Sigmoid colon (tissue), 7 donors: ENCODE measurements at regions of chr19 and their contacts with region 1.

Region 1: GRCh38 chr19:36915992-36916830 is at the starts of genes ZNF568 and ZNF829:
- DNase-seq: peak; percentile 91
- H3K4me3 ChIP-seq: peak within 1 kb of the TSS; percentile 65 to 77 (median 68)
- H3K27ac ChIP-seq: peak within 1 kb of the TSS; percentile 91 to 96 (median 93)
- H3K4me1 ChIP-seq: peaks cover 0 to 18% (median 17%) of the 10 kb centered on the region in 4 donors
- H3K27me3 ChIP-seq: no peaks in the 10 kb centered on the region
- CTCF ChIP-seq: peak in 3 of 4 experiments; percentile 38 to 56 (median 54)
- EP300 ChIP-seq: no peak
- POLR2A ChIP-seq: no peak
- total RNA-seq, gene ZNF568: 8.7 to 18.9 (median 14.0) TPM
- total RNA-seq, gene ZNF829: 3.6 to 6.4 (median 4.8) TPM

Region 2: GRCh38 chr19:36378625-36379509 is 537.3 kb before region 1 on chr19 and contains the start of gene ZFP14:
- intact Hi-C with region 1: loop called (anchors 10 kb)
- DNase-seq: peak; percentile 95
- H3K4me3 ChIP-seq: peak within 1 kb of the TSS; percentile 70 to 79 (median 74)
- H3K27ac ChIP-seq: peak within 1 kb of the TSS; percentile 85 to 88 (median 86)
- H3K4me1 ChIP-seq: peaks cover 0 to 22% (median 13%) of the 10 kb centered on the region in 4 donors
- H3K27me3 ChIP-seq: no peaks in the 10 kb centered on the region
- CTCF ChIP-seq: no peak
- EP300 ChIP-seq: no peak
- POLR2A ChIP-seq: peak; percentile 72 to 80
- total RNA-seq, gene ZFP14: 3.5 to 13.3 (median 7.6) TPM

Region 3: GRCh38 chr19:36665832-36666231 is 250.4 kb before region 1 on chr19:
- intact Hi-C with region 1: loop called (anchors 5 kb)
- DNase-seq: no peak
- H3K4me3 ChIP-seq: peak overlapping the region; percentile 66 to 86 (median 76)
- H3K27ac ChIP-seq: no peak overlapping the region
- H3K4me1 ChIP-seq: peaks cover 0 to 21% (median 17%) of the 10 kb centered on the region in 4 donors
- H3K27me3 ChIP-seq: no peaks in the 10 kb centered on the region
- CTCF ChIP-seq: no peak
- EP300 ChIP-seq: no peak
- POLR2A ChIP-seq: no peak

Region 4: GRCh38 chr19:36745870-36746269 is 170.3 kb before region 1 on chr19:
- intact Hi-C with region 1: no loop called
- DNase-seq: no peak
- H3K4me3 ChIP-seq: no peak overlapping the region
- H3K27ac ChIP-seq: no peak overlapping the region
- H3K4me1 ChIP-seq: no peaks in the 10 kb centered on the region
- H3K27me3 ChIP-seq: no peaks in the 10 kb centered on the region
- CTCF ChIP-seq: no peak
- EP300 ChIP-seq: no peak
- POLR2A ChIP-seq: no peak

Region 5: DNA sequence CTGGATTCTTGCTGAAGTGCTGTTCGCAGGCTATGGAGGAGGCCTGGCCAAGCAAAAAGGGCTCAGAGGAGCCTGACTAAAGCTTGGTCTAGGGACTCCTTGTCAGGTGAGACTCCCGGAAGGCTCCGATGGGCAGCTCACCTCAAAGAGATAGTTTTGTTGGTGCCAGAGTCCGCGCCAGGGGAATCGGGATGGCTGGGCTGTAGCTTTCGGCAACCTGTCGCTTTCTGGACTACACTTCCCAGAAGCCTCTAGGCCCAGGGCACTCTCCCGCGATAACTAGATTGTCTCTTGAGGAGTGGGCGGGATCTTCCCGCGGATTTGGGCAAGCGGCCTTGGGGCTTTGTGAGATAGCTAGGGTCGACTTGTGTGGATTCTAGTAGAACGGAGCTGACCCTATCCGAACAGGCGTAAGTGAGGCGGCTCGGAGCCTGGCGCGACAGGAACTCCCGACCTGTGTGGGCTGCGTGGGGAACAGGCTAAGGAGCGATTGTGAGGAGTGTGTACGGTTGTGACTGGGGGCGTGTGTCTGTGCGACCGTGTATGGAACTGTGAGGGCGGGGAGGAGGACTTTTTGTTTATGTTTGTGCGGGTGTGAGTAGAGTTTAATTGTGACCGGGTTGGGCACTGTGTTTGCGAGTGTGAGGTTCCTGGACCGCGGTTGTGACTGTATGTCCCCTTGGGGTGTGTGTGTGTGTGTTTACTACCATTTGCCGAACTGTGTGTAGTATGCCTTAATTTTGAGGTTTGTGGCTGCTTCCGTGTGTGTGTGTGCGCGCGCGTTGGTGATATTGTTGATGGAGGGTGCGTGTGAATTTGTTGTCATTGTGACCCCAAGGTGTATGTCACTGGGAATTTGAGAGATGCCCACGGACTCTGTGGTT is 65.4 kb before region 1 on chr19 and contains the start of gene ZNF345:
- intact Hi-C with region 1: loop called (anchors 2 kb)
- DNase-seq: peak; percentile 95
- H3K4me3 ChIP-seq: peak within 1 kb of the TSS; percentile 58 to 77 (median 70)
- H3K27ac ChIP-seq: peak within 1 kb of the TSS; percentile 88 to 92 (median 90)
- H3K4me1 ChIP-seq: peaks cover 0 to 22% (median 17%) of the 10 kb centered on the region in 4 donors
- H3K27me3 ChIP-seq: no peaks in the 10 kb centered on the region
- CTCF ChIP-seq: no peak
- EP300 ChIP-seq: no peak
- POLR2A ChIP-seq: peak in 1 of 2 donors; percentile 37
- total RNA-seq, gene ZNF345: 4.6 to 13.0 (median 6.2) TPM

Region 6: GRCh38 chr19:36962346-36962745 is 46.1 kb after region 1 on chr19:
- intact Hi-C with region 1: no loop called
- DNase-seq: no peak
- H3K4me3 ChIP-seq: no peak overlapping the region
- H3K27ac ChIP-seq: no peak overlapping the region
- H3K4me1 ChIP-seq: no peaks in the 10 kb centered on the region
- H3K27me3 ChIP-seq: no peaks in the 10 kb centered on the region
- CTCF ChIP-seq: no peak
- EP300 ChIP-seq: no peak
- POLR2A ChIP-seq: no peak

Region 7: GRCh38 chr19:36973021-36973843 is 57.0 kb after region 1 on chr19:
- intact Hi-C with region 1: loop called (anchors 5 kb)
- DNase-seq: peak; percentile 92
- H3K4me3 ChIP-seq: peak overlapping the region; percentile 56 to 74 (median 64)
- H3K27ac ChIP-seq: peak overlapping the region; percentile 80 to 88 (median 86)
- H3K4me1 ChIP-seq: peaks cover 0 to 16% (median 14%) of the 10 kb centered on the region in 4 donors
- H3K27me3 ChIP-seq: no peaks in the 10 kb centered on the region
- CTCF ChIP-seq: peak; percentile 95 to 99 (median 98)
- EP300 ChIP-seq: no peak
- POLR2A ChIP-seq: no peak

Region 8: DNA sequence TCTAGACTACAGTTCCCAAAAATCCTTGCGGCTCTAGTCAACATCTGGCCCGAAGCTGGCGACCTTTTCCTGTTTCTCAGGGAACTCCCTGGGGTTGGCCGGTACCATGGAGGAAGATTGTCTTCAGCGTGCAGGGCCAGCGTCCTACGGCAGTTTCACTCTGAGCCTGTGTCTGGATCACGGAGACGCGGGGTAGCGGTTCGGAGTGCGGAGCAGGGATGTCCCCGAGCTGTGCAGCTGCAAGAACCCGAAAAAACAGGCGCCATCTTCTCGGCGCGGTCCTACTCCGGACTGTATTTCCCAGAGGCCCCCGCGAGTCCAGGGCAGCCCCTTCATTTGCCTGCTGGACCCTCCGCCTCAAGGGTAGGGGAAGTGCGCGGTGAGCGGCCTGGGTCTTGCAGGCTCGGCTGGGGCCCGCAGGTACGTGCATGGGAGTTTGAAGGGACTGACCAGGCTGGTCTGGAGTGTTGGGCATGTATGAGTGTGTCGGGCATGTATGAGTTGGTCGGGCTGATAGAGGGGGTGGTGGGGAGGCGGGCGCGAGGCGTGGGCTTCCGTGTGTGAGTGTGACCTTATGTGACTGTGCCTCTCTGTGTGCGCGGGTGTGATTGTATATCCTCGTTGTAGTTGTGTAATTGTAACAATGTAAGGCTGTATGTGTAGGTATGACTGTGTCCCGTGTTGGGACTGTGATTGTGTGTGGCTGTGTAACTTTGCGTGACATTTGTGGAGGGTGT is 301.8 kb after region 1 on chr19 and contains the start of gene ZNF383:
- intact Hi-C with region 1: loop called (anchors 2 kb)
- DNase-seq: peak; percentile 88
- H3K4me3 ChIP-seq: peak within 1 kb of the TSS; percentile 71 to 91 (median 82)
- H3K27ac ChIP-seq: peak within 1 kb of the TSS; percentile 86 to 95 (median 93)
- H3K4me1 ChIP-seq: peaks cover 0 to 16% (median 11%) of the 10 kb centered on the region in 4 donors
- H3K27me3 ChIP-seq: no peaks in the 10 kb centered on the region
- CTCF ChIP-seq: no peak
- EP300 ChIP-seq: no peak
- POLR2A ChIP-seq: peak; percentile 12 to 37
- total RNA-seq, gene ZNF383: 10.9 to 19.7 (median 13.0) TPM

Region 9: DNA sequence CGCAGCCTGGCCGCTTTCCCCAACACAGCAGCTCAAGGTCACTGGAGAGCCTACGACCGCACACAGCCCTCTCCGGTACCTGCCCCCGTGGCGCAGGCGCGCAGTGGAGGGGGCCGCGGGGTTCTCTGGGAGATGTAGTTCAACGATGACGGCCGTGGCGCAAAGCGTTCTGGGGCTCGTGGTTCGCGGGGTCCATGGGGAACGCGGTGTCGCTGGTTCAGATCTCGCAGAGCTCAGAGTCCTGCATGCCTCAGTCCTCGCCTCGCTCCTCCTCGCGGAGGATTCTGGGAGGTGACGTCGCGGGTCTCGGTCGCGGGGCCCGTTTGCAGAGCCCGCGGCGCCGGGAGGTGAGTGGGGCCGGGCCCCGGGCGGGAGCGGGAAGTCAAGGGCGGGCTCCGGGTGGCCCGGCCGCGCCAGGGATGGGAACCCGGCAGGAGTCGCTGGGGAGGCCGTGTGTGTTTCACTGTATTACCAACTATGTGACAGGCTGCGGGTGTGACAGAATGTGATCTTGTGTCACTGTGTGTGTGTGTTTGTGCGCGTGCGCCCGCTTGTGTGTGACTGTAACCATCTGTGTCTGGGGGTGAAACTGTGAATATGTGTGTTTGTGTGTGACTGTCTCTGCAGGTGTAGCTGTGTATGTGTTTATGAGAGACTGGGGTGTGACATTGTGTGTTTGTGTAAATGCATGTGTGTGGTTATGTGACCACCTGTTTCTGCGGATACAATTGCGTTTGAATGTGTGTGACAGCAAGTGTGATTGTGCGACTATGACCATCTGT is 454.9 kb after region 1 on chr19 and contains the start of gene ZNF527:
- intact Hi-C with region 1: loop called (anchors 5 kb)
- DNase-seq: peak; percentile 98
- H3K4me3 ChIP-seq: peak within 1 kb of the TSS; percentile 64 to 74 (median 66)
- H3K27ac ChIP-seq: peak within 1 kb of the TSS; percentile 83 to 91 (median 86)
- H3K4me1 ChIP-seq: peaks cover 0 to 14% (median 6%) of the 10 kb centered on the region in 4 donors
- H3K27me3 ChIP-seq: no peaks in the 10 kb centered on the region
- CTCF ChIP-seq: no peak
- EP300 ChIP-seq: peak in 1 of 4 donors; percentile 31
- POLR2A ChIP-seq: peak in 1 of 2 donors; percentile 90
- total RNA-seq, gene ZNF527: 6.1 to 13.8 (median 9.7) TPM